HepG2 (cell line): ENCODE measurements at regions of chr3 and their contacts with region 1.

Region 1: DNA sequence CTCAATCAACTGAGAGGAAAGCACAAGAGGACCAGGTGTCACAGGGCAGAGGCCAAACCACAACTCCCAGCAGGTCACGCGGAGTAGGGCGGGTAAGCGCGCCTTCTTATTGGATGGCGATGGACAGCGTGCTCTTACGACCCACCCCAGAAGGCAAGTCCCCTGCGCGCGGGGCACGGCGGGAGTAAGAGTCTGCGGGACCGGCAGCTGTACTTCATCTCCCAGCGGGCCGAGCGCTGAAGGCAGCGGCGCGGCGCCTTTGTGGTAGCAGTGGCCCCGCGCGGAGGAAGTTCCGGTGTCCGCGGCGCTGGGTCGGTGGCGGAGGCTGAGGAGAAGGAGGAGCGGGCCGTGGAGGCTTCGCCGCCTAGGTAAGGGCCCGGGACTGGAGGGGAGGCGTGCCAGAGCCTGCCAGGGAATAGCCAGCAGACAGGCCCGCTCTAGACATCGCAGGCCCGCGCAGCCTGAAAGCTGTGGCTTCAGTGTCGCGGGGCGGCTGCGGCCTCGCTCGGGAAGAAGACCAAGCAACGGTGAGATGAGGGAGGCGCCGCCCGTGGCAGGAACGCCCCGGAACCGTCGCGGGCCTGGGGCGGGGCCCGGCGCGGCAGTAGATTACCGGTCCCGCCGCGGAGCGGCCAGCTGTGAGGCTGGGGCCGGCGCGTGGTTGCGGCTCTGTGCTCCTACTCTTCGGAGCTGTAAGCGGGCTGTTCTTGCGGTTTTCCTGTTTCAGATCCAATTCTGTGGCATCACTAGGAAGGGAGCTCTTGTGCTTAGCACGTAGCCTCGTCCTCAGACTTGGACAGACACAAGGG is at the start of gene RBM6:
- DNase-seq: peak; percentile 97
- ATAC-seq: peak; percentile 97
- H3K4me3 ChIP-seq: peak within 1 kb of the TSS; percentile 84 to 94 (median 93)
- H3K27ac ChIP-seq: peak within 1 kb of the TSS; percentile 95
- H3K4me1 ChIP-seq: peaks cover 35% of the 10 kb centered on the region
- H3K27me3 ChIP-seq: peaks cover 0 to 2% of the 10 kb centered on the region in 2 experiments; a peak in 2 of 5 replicates
- CTCF ChIP-seq: peak; percentile 25; the same call in 1 of the 2 replicates
- EP300 ChIP-seq: peak in 1 of 2 experiments; percentile 5; a peak in 1 of 4 replicates
- POLR2A ChIP-seq: peak; percentile 90 to 93
- RAD21 ChIP-seq: peak; percentile 39; the same call in 1 of the 2 replicates
- total RNA-seq, gene RBM6: 51.6 and 86.1 TPM in 2 replicates

Region 2: GRCh38 chr3:49929331-49930240 is 10.5 kb before region 1 on chr3 and contains the start of gene MON1A:
- CTCF ChIA-PET with region 1: interaction called, 3 read pairs
- POLR2A ChIA-PET with region 1: interaction called, 93 read pairs
- in situ Hi-C with region 1: no loop called
- intact Hi-C with region 1: loop called (anchors 1 kb)
- DNase-seq: peak; percentile 91
- ATAC-seq: peak; percentile 94
- H3K4me3 ChIP-seq: peak within 1 kb of the TSS; percentile 68 to 83 (median 70)
- H3K27ac ChIP-seq: peak within 1 kb of the TSS; percentile 81
- H3K4me1 ChIP-seq: peaks cover 52% of the 10 kb centered on the region
- H3K27me3 ChIP-seq: no peaks in the 10 kb centered on the region
- CTCF ChIP-seq: peak; percentile 52
- EP300 ChIP-seq: 0 out of 4 replicates have a peak, but pooled peaks of 1 of the 2 experiments have one; percentile 27
- POLR2A ChIP-seq: peak; percentile 64 to 79
- RAD21 ChIP-seq: 0 out of 2 replicates have a peak, but pooled peaks have one; percentile 7
- total RNA-seq, gene MON1A: 8.8 and 9.0 TPM in 2 replicates